Sigmoid colon (tissue), 7 donors: ENCODE measurements at regions of chr5 and their contacts with region 1.

Region 1: DNA sequence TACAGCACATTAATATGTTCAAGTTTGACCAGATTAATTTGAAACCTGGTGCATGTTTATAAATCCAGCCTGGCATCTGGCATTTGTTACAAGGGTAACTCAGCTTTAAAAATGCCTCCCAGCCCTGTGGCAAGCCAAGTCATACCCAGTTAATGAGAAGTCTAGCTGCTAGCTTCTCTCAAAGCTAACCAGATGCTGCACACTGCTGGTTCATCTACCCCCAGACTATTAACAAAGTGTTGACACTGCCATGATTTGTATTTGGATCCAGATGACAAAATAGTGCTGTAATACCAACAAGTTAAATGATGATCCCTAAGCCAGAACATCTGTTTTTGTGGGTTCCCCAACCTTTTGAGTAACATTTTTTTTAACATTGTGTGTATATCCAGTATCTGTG is 573.7 kb upstream of the DAB2 start:
- DNase-seq: peak; percentile 86
- H3K4me3 ChIP-seq: no peak overlapping the region
- H3K27ac ChIP-seq: peak overlapping the region in 3 of 4 donors; percentile 57 to 79 (median 68)
- H3K4me1 ChIP-seq: peaks cover 0 to 31% (median 14%) of the 10 kb centered on the region in 4 donors
- H3K27me3 ChIP-seq: no peaks in the 10 kb centered on the region
- CTCF ChIP-seq: no peak
- EP300 ChIP-seq: peak in 3 of 4 donors; percentile 15 to 90 (median 77)
- POLR2A ChIP-seq: no peak

Region 2: DNA sequence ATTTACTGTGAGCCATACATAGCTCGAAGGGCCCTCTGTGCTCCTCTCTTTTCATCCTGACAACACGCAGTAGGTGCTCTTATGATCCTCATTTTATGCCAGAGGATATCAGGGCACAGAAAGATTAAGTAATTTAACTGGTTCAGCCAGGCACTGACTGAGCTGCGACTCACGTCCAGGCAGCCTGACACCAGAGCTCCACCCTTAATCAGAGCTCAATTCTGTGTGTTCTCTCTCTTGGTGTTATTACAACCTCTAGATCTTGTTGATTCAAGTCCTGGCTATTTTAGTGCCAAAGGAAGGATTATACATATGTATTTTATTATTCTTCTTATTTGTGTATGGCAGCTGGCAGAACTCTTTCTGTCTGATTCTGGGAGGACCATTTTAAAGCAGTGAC is 1093.0 kb before region 1 on chr5:
- intact Hi-C with region 1: no loop called
- DNase-seq: no peak
- H3K4me3 ChIP-seq: no peak overlapping the region
- H3K27ac ChIP-seq: no peak overlapping the region
- H3K4me1 ChIP-seq: no peaks in the 10 kb centered on the region
- H3K27me3 ChIP-seq: no peaks in the 10 kb centered on the region
- CTCF ChIP-seq: no peak
- EP300 ChIP-seq: no peak
- POLR2A ChIP-seq: no peak

Region 3: GRCh38 chr5:40052808-40053207 is 54.3 kb after region 1 on chr5:
- intact Hi-C with region 1: loop called (anchors 5 kb)
- DNase-seq: no peak
- H3K4me3 ChIP-seq: no peak overlapping the region
- H3K27ac ChIP-seq: peak overlapping the region in 1 of 4 donors; percentile 66
- H3K4me1 ChIP-seq: peaks cover 0 to 45% (median 37%) of the 10 kb centered on the region in 4 donors
- H3K27me3 ChIP-seq: no peaks in the 10 kb centered on the region
- CTCF ChIP-seq: no peak
- EP300 ChIP-seq: no peak
- POLR2A ChIP-seq: no peak

Region 4: DNA sequence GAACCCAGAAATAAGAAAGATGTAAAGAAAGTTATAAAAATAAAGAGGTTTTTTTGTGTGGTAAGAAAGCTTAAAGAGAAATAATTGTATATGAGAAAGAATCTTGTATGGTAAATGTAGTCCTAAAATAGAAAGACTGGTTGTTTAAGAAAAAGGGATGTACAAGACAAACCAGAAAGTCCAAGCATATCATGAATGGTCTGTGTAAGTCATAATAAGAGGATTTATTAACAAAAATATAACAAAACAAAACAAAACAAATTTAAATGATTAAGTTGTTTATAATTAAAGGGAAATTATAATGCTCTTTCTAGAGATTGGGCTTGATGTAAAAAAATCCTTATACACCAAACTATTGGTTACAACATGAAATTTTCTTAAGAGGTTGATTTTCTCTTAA is 90.8 kb after region 1 on chr5:
- intact Hi-C with region 1: loop called (anchors 1 kb)
- DNase-seq: no peak
- H3K4me3 ChIP-seq: no peak overlapping the region
- H3K27ac ChIP-seq: no peak overlapping the region
- H3K4me1 ChIP-seq: peaks cover 0 to 17% (median 8%) of the 10 kb centered on the region in 4 donors
- H3K27me3 ChIP-seq: no peaks in the 10 kb centered on the region
- CTCF ChIP-seq: no peak
- EP300 ChIP-seq: no peak
- POLR2A ChIP-seq: no peak

Region 5: GRCh38 chr5:40446910-40447309 is 448.4 kb after region 1 on chr5:
- intact Hi-C with region 1: no loop called
- DNase-seq: no peak
- H3K4me3 ChIP-seq: no peak overlapping the region
- H3K27ac ChIP-seq: no peak overlapping the region
- H3K4me1 ChIP-seq: no peaks in the 10 kb centered on the region
- H3K27me3 ChIP-seq: no peaks in the 10 kb centered on the region
- CTCF ChIP-seq: no peak
- EP300 ChIP-seq: no peak
- POLR2A ChIP-seq: no peak